Breast epithelium (tissue), 4 donors: ENCODE measurements at regions of chr12 and their contacts with region 1.

Region 1: GRCh38 chr12:81403348-81403747 is 325.5 kb downstream of the ACSS3 start:
- DNase-seq: no peak
- H3K4me3 ChIP-seq: no peak overlapping the region
- H3K27ac ChIP-seq: no peak overlapping the region
- H3K4me1 ChIP-seq: no peaks in the 10 kb centered on the region
- H3K27me3 ChIP-seq: no peaks in the 10 kb centered on the region
- CTCF ChIP-seq: no peak
- POLR2A ChIP-seq: no peak

Region 2: GRCh38 chr12:80681287-80681686 is 722.1 kb before region 1 on chr12:
- intact Hi-C with region 1: loop called (anchors 5 kb)
- DNase-seq: no peak
- H3K4me3 ChIP-seq: no peak overlapping the region
- H3K27ac ChIP-seq: no peak overlapping the region
- H3K4me1 ChIP-seq: no peaks in the 10 kb centered on the region
- H3K27me3 ChIP-seq: no peaks in the 10 kb centered on the region
- CTCF ChIP-seq: no peak
- POLR2A ChIP-seq: no peak

Region 3: GRCh38 chr12:81958406-81958805 is 555.1 kb after region 1 on chr12:
- intact Hi-C with region 1: no loop called
- DNase-seq: no peak
- H3K4me3 ChIP-seq: no peak overlapping the region
- H3K27ac ChIP-seq: no peak overlapping the region
- H3K4me1 ChIP-seq: no peaks in the 10 kb centered on the region
- H3K27me3 ChIP-seq: no peaks in the 10 kb centered on the region
- CTCF ChIP-seq: no peak
- POLR2A ChIP-seq: no peak